ENCODE measurements at regions of chr7 and their contacts with region 1.

Region 1: GRCh38 chr7:129502376-129502776 is at the start of gene SMKR1:
- DNase-seq: peak; percentile 85 to 98 (median 93)
- ATAC-seq: peak; percentile 95
- H3K4me3 ChIP-seq: peak within 1 kb of the TSS; percentile 63 to 71
- H3K4me3 Mint-ChIP-seq: peak within 1 kb of the TSS; percentile 79
- H3K27ac ChIP-seq: peak within 1 kb of the TSS; percentile 64 to 75
- H3K27ac Mint-ChIP-seq: peak within 1 kb of the TSS; percentile 86
- H3K4me1 ChIP-seq: peaks cover 13% of the 10 kb centered on the region
- H3K4me1 Mint-ChIP-seq: peaks cover 17% of the 10 kb centered on the region
- H3K27me3 ChIP-seq: no peaks in the 10 kb centered on the region
- H3K27me3 Mint-ChIP-seq: no peaks in the 10 kb centered on the region
- CTCF ChIP-seq: no peak
- total RNA-seq, gene SMKR1: 0.56 to 0.68 TPM

Region 2: DNA sequence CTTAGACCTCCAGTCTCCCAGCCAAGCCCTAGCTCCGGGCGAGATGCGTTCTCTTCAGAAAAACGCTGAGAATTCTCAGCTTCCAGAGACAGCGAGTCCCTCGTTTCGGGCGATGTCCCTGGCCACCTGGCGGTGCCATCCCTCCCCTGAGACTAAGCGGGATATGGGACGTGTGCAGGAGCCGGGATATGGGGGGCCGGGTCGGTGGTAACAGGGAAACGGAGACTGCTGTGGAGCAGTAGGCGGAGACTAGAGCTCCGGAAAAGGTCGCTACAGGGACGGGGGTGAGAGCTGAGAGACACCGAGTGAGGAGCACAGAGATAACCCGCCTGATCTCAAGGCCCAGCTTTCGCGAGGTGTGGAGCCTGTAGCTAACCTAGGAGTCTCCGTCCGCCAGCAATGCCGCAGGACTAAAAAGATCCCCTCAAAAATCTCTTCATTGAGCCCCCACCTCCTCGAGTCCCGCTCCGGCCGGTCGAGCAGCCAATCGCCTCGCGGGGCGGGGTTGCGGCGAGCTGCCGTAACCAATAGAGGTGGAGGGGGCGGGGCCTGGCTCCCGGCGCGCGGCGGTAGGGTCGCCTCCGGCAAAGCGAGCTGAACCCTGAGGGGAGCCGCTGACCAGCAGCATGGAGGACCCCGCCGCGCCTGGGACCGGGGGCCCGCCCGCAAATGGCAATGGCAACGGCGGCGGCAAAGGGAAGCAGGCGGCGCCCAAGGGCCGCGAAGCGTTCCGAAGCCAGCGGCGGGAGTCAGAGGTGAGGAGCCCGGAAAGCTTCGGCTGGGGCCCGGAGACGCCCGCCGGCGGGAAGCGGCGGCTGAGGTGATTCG is 68.3 kb before region 1 on chr7 and contains the start of gene STRIP2:
- CTCF ChIA-PET with region 1: no interaction called
- POLR2A ChIA-PET with region 1: no interaction called
- intact Hi-C with region 1: loop called (anchors 1 to 2 kb)
- DNase-seq: peak; percentile 73 to 92 (median 90)
- ATAC-seq: peak; percentile 95
- H3K4me3 ChIP-seq: peak within 1 kb of the TSS; percentile 91 to 93
- H3K4me3 Mint-ChIP-seq: peak within 1 kb of the TSS; percentile 94
- H3K27ac ChIP-seq: no peak within 1 kb of the TSS
- H3K27ac Mint-ChIP-seq: peak within 1 kb of the TSS; percentile 46
- H3K4me1 ChIP-seq: peaks cover 12% of the 10 kb centered on the region
- H3K4me1 Mint-ChIP-seq: peaks cover 20% of the 10 kb centered on the region
- H3K27me3 ChIP-seq: peaks cover 0 to 8% of the 10 kb centered on the region in 2 experiments
- H3K27me3 Mint-ChIP-seq: peaks cover 29% of the 10 kb centered on the region
- CTCF ChIP-seq: no peak
- total RNA-seq, gene STRIP2: 0.19 TPM in 1 of 2 experiments, not detected in the other

Region 3: DNA sequence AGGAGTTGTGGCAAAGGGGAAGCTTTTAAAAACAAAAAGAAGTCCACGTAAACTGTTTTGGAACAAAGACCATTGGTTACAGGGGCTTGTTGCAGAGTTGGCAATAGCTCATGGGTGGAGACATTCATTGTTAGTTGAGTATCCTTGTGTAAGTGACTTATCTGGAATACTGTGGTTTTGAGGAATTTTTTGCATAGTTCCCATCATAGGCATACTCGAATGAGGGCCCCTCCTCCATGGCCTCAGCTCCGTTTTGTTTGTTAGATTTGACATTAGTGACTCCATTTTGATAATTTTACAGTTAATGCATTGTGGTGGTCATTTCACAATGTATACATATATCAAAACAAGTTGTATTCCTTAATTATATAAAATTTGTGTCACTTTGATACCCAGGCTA is 12.9 kb before region 1 on chr7:
- CTCF ChIA-PET with region 1: no interaction called
- POLR2A ChIA-PET with region 1: no interaction called
- intact Hi-C with region 1: no loop called
- DNase-seq: no peak
- ATAC-seq: no peak
- H3K4me3 ChIP-seq: no peak overlapping the region
- H3K4me3 Mint-ChIP-seq: no peak overlapping the region
- H3K27ac ChIP-seq: no peak overlapping the region
- H3K27ac Mint-ChIP-seq: no peak overlapping the region
- H3K4me1 ChIP-seq: no peaks in the 10 kb centered on the region
- H3K4me1 Mint-ChIP-seq: peaks cover 2% of the 10 kb centered on the region
- H3K27me3 ChIP-seq: no peaks in the 10 kb centered on the region
- H3K27me3 Mint-ChIP-seq: no peaks in the 10 kb centered on the region
- CTCF ChIP-seq: no peak

Region 4: DNA sequence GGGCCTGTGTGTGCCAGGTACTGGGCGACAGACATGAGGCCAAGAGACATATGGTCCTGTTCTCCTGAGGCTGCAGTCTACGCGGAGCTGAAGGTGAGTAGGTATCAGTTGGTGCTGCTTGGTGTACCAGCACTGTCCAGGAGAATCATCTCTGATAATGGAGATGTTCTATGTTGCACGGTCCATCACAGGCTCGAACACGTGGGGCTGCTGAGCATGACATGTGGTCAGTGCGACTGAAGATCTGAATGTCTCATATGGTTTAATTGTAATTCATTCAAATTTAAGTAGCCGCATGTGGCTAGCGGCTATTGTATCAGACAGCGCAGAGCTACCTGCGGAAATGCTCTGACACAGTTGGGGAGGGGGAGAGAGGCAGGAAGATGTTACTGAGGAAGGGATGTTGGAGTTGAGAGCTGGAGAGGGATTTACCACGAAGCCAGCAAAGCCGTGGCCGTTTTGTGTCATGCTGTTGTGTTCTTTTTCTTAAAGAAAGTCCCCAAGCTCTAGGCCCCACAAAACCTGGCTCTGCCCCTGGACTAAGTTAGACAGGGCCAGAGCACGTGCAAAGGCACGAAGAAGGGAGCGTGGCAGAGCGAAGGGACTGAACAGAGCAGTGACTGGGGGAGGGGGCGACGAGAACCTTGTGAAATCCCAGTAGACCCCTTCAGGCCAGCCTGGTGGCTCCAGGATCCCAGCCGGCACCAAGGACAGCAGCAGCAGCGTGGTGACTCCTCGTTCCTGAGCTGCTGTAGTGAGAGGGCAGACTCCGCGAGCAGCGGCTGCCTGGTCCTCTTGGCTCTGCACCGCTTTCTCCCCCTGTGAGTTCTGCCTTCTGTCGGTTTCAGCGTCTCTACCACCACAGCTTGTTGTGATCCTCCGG is 20.0 kb after region 1 on chr7:
- CTCF ChIA-PET with region 1: no interaction called
- POLR2A ChIA-PET with region 1: no interaction called
- intact Hi-C with region 1: no loop called
- DNase-seq: no peak
- ATAC-seq: no peak
- H3K4me3 ChIP-seq: no peak overlapping the region
- H3K4me3 Mint-ChIP-seq: no peak overlapping the region
- H3K27ac ChIP-seq: no peak overlapping the region
- H3K27ac Mint-ChIP-seq: no peak overlapping the region
- H3K4me1 ChIP-seq: no peaks in the 10 kb centered on the region
- H3K4me1 Mint-ChIP-seq: peaks cover 7% of the 10 kb centered on the region
- H3K27me3 ChIP-seq: no peaks in the 10 kb centered on the region
- H3K27me3 Mint-ChIP-seq: peaks cover 18% of the 10 kb centered on the region
- CTCF ChIP-seq: no peak

Region 5: GRCh38 chr7:130668257-130669084 is 1166.1 kb after region 1 on chr7 and contains the start of gene COPG2:
- CTCF ChIA-PET with region 1: no interaction called
- POLR2A ChIA-PET with region 1: no interaction called
- intact Hi-C with region 1: loop called in 1 of 2 experiments (anchors 5 kb)
- DNase-seq: peak; percentile 34 to 87 (median 72)
- ATAC-seq: peak; percentile 81
- H3K4me3 ChIP-seq: peak within 1 kb of the TSS; percentile 73 to 77
- H3K4me3 Mint-ChIP-seq: peak within 1 kb of the TSS; percentile 93
- H3K27ac ChIP-seq: peak within 1 kb of the TSS; percentile 43 to 61
- H3K27ac Mint-ChIP-seq: peak within 1 kb of the TSS; percentile 76
- H3K4me1 ChIP-seq: no peaks in the 10 kb centered on the region
- H3K4me1 Mint-ChIP-seq: peaks cover 20% of the 10 kb centered on the region
- H3K27me3 ChIP-seq: no peaks in the 10 kb centered on the region
- H3K27me3 Mint-ChIP-seq: peaks cover 3% of the 10 kb centered on the region
- CTCF ChIP-seq: no peak
- total RNA-seq, gene COPG2: 2.7 to 3.0 TPM